BJ (cell line): ENCODE measurements at regions of chr10 and their contacts with region 1.

Region 1: DNA sequence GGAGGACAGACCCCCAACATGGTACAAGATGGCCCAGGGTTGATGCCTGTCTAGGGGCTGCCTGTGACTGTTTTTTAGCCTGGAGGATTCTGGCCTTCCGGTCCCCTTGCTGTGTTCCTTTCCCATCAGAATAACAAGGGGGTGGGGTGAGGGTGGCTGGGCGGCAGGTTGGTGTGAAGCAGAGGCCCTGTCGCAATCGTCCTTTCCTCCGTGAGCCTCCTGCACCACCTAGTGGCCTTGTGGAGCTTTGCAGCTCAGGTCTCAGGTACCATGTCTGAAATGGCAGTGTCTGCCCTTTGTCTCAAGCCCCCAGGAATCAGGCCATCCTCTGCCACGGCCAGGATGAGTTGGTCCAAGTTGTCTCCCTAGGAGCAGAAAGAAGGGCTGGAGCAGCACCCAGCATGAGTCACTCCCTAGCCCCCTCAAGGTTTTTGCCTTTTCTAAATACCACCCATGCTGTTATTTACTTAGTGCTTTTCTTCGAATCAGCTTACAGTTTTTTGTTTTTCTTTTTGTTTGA is 24.2 kb downstream of the TACR2 start:
- DNase-seq: no peak
- H3K4me3 ChIP-seq: no peak overlapping the region
- H3K27me3 ChIP-seq: no peaks in the 10 kb centered on the region
- CTCF ChIP-seq: peak; percentile 98

Region 2: DNA sequence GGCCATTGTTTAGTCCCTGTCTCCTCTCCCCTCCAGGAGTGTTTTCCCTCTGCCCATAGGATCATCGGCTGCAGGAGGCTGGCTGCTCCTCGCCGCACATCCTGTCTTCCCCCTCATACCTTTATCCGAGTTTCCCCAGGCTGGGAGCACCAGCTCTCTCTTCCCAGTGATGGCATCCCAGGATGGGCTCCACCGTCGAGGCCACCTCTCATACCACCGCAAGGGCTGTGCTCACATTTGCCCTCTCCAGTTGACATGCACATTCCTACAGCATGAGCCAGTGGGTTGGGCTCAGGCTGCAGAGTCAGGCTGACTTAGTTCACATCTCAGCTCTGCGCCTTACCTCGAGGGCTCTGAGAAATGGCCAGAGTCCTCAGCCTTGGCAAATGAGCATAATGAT is 160.3 kb before region 1 on chr10:
- CTCF ChIA-PET with region 1: interaction called, 110 read pairs
- POLR2A ChIA-PET with region 1: interaction called, 6 read pairs
- DNase-seq: no peak
- H3K4me3 ChIP-seq: no peak overlapping the region
- H3K27me3 ChIP-seq: no peaks in the 10 kb centered on the region
- CTCF ChIP-seq: no peak

Region 3: GRCh38 chr10:69237528-69238159 is 154.9 kb before region 1 on chr10:
- CTCF ChIA-PET with region 1: interaction called, 110 read pairs
- POLR2A ChIA-PET with region 1: interaction called, 6 read pairs
- DNase-seq: no peak
- H3K4me3 ChIP-seq: no peak overlapping the region
- H3K27me3 ChIP-seq: no peaks in the 10 kb centered on the region
- CTCF ChIP-seq: peak; percentile 94

Region 4: GRCh38 chr10:69278446-69278963 is 114.0 kb before region 1 on chr10 and contains the start of gene HK1:
- CTCF ChIA-PET with region 1: no interaction called
- POLR2A ChIA-PET with region 1: no interaction called
- DNase-seq: no peak
- H3K4me3 ChIP-seq: no peak within 1 kb of the TSS
- H3K27me3 ChIP-seq: peaks cover 3% of the 10 kb centered on the region
- CTCF ChIP-seq: no peak
- polyA plus RNA-seq, gene HK1: 39.7 and 47.5 TPM in 2 replicates

Region 5: DNA sequence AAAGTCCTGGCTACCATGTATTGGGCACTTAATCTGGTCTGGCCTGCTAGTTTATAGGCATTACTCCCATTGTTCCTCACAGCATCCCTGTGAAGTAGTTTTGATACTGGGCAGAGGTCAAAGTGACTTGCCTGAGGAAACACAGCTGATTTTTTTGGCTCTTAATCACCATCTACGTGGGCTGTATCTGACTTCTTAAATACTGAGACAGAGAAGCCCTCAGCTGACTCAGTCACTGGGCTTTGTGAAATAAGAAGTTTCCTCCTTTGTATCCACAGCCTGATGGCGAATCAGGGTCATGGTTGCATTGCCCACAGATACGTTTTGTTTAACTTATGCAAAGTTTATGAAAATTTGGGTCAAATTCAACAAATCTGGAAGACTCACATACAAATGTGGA is 11.0 kb after region 1 on chr10:
- CTCF ChIA-PET with region 1: interaction called, 20 read pairs
- POLR2A ChIA-PET with region 1: no interaction called
- DNase-seq: no peak
- H3K4me3 ChIP-seq: no peak overlapping the region
- H3K27me3 ChIP-seq: no peaks in the 10 kb centered on the region
- CTCF ChIP-seq: no peak

Region 6: DNA sequence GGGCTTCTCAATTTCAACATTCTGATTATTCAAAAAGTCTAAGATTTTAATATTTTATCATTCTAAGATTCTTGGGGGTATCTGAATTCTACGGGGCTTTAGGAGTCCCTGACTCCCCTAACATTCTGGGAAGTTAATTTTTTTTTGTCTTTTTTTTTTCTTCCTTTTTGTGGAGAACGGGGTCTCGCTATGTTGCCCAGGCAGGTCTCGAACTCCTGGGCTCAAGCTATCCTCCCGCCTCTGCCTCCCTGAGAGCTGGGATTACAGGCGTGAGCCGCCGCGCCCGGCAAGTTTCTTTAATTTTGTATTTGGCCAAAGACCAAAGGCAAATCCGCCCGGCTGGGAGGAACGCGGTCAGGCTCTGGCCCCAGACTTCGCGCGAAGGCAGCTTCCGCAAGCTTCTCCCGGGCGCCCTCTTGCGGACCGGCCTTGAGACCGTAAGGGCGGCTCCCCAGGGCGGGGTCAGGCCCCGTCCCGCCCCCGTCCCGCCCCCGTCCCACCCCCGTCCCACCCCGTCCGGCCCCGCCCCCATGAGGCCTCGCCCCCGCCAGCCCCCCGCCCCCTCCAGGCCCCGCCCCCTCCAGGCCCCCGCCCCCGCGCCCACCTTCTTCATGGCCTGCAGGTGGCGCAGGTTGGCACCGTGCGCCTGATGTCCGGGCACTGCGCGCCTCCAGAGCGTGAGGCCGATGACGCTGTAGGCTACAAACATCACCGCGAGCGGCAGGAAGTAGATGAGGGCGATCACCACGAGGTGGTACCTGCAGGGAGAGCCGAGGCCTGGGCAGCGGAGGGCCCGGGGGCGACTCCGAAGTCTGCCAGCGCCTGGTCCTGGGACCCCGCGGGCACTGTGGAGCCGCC is 16.0 kb after region 1 on chr10:
- CTCF ChIA-PET with region 1: interaction called, 20 read pairs
- POLR2A ChIA-PET with region 1: no interaction called
- DNase-seq: peak; percentile 60
- H3K4me3 ChIP-seq: peak overlapping the region; percentile 42
- H3K27me3 ChIP-seq: no peaks in the 10 kb centered on the region
- CTCF ChIP-seq: peak; percentile 69